MCF 10A (cell line): ENCODE measurements at regions of chr6 and their contacts with region 1.

Region 1: DNA sequence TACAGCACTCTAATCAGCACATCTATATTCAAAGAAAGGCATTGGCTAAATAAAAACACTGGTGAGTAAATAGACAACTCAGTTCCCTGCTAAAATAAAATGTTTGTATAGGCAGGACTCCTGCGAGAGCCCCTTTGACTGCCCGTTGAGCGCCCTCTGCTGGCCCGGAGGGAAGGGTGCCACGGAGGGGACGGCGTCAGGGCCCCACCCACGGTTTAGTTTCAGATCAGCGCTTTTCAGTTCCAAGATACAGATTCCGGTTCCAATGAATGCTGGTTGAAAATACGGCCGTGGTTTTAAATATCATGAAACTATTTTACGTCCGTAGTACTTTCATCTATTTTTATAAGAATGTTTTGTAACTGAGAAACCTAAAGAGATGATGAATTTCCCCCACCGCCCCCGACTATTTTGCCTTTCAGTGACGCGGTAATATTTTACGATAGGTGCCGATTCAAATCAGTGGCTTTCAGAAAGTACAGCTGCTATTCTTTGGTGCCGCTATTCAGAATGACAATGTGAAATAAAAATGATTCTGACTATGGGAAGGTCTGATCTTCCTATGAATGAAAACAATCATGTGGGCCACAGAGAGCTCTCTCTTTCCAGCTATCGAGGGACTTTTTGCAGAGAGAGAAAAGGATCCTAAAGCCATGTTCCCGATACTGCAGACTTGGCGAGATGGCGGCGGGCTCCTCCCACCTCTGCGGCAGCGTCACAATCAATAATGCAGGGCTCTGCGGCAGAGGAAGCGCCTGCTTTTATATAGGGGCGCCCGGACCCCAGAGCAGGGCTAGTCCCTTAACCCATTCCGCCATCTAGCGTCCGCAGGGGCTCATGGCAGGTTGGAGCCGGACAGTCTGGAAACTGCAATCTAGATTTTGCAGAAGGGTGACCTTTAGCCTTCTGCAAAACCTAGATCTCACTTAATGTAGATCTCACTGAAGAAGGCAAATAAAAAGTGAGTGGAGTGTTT is 10.6 kb upstream of the CCN6 start:
- DNase-seq: peak; percentile 80
- H3K4me3 Mint-ChIP-seq: peak overlapping the region; percentile 81
- H3K27ac Mint-ChIP-seq: peak overlapping the region; percentile 42
- H3K4me1 Mint-ChIP-seq: no peaks in the 10 kb centered on the region
- H3K27me3 Mint-ChIP-seq: no peaks in the 10 kb centered on the region
- CTCF ChIP-seq: peak; percentile 95

Region 2: DNA sequence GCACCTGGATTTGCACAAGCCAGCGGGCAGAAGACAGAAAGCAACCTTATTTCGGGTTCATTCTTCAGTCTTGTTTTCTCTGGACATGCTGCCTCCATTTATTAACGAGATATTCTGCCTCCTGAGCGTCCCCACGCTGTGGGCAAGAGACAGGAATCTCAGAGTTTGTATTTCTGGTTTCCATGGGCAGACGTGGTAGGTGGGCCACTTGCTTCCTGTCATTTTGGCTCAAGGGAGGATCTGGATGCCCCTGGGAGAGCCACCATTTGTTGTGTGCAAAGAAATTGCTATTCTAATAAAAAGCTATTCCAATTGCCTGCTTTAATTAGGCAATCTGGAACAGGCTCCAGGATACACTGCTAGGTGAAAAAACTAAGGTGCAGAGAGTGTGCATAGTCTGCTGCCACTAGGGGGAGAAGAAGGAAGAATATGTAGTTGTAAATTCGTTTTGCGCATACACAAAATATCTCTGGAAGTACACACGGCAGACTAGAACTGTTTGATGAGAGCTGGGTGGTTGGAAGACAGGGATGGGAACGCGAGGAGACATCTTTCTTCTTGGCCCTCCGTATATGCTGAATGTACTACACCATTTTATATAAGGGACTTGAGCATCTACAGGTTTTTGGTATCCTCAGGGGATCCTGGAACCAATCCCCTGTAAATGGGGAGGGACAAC is 986.1 kb before region 1 on chr6:
- CTCF ChIA-PET with region 1: no interaction called
- POLR2A ChIA-PET with region 1: no interaction called
- intact Hi-C with region 1: loop called (anchors 2 kb)
- DNase-seq: peak; percentile 62
- H3K4me3 Mint-ChIP-seq: no peak overlapping the region
- H3K27ac Mint-ChIP-seq: no peak overlapping the region
- H3K4me1 Mint-ChIP-seq: no peaks in the 10 kb centered on the region
- H3K27me3 Mint-ChIP-seq: peaks cover 40% of the 10 kb centered on the region
- CTCF ChIP-seq: peak; percentile 56

Region 3: GRCh38 chr6:111483736-111484632 is 559.3 kb before region 1 on chr6:
- CTCF ChIA-PET with region 1: no interaction called
- POLR2A ChIA-PET with region 1: no interaction called
- intact Hi-C with region 1: loop called (anchors 1 kb)
- DNase-seq: peak; percentile 96
- H3K4me3 Mint-ChIP-seq: peak overlapping the region; percentile 89
- H3K27ac Mint-ChIP-seq: peak overlapping the region; percentile 95
- H3K4me1 Mint-ChIP-seq: peaks cover 21% of the 10 kb centered on the region
- H3K27me3 Mint-ChIP-seq: no peaks in the 10 kb centered on the region
- CTCF ChIP-seq: no peak

Region 4: DNA sequence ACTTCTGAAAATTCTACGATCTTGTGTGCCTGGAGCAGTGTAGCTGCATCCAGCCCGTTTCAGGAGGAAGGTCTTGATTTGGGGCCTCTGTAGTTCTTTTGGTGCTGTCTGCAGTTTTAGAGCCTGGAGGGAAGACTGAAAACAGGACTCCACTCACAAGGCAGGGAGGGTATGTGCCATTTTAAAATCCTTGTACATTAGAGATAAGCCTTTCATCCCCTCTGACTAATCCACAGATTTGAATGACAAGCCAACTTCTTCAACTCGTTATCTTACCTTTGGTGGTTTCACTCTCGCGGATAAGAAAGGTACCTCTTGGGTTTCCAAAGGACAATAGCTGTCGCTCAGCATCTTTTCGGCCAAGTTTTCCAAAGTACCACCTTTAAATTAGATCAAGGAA is 339.6 kb before region 1 on chr6:
- CTCF ChIA-PET with region 1: interaction called, 136 read pairs
- POLR2A ChIA-PET with region 1: no interaction called
- intact Hi-C with region 1: no loop called
- DNase-seq: no peak
- H3K4me3 Mint-ChIP-seq: no peak overlapping the region
- H3K27ac Mint-ChIP-seq: no peak overlapping the region
- H3K4me1 Mint-ChIP-seq: no peaks in the 10 kb centered on the region
- H3K27me3 Mint-ChIP-seq: no peaks in the 10 kb centered on the region
- CTCF ChIP-seq: no peak

Region 5: GRCh38 chr6:111873178-111874024 is 169.9 kb before region 1 on chr6 and contains the start of gene FYN:
- CTCF ChIA-PET with region 1: no interaction called
- POLR2A ChIA-PET with region 1: no interaction called
- intact Hi-C with region 1: loop called (anchors 2 kb)
- DNase-seq: peak; percentile 96
- H3K4me3 Mint-ChIP-seq: peak within 1 kb of the TSS; percentile 82
- H3K27ac Mint-ChIP-seq: peak within 1 kb of the TSS; percentile 28
- H3K4me1 Mint-ChIP-seq: peaks cover 13% of the 10 kb centered on the region
- H3K27me3 Mint-ChIP-seq: peaks cover 11% of the 10 kb centered on the region
- CTCF ChIP-seq: peak; percentile 13
- total RNA-seq, gene FYN: 37.8 and 53.7 TPM in 2 replicates

Region 6: GRCh38 chr6:112029045-112029822 is 14.1 kb before region 1 on chr6:
- CTCF ChIA-PET with region 1: interaction called, 47 read pairs
- POLR2A ChIA-PET with region 1: no interaction called
- intact Hi-C with region 1: no loop called
- DNase-seq: peak; percentile 69
- H3K4me3 Mint-ChIP-seq: no peak overlapping the region
- H3K27ac Mint-ChIP-seq: no peak overlapping the region
- H3K4me1 Mint-ChIP-seq: peaks cover 10% of the 10 kb centered on the region
- H3K27me3 Mint-ChIP-seq: peaks cover 11% of the 10 kb centered on the region
- CTCF ChIP-seq: peak; percentile 71